WTC11 (cell line): ENCODE measurements at regions of chr22 and their contacts with region 1.

Region 1: GRCh38 chr22:22666307-22667091 is 22.1 kb downstream of the GGTLC2 start:
- DNase-seq: peak; percentile 71
- ATAC-seq: peak; percentile 95
- H3K4me3 Mint-ChIP-seq: no peak overlapping the region
- H3K27ac Mint-ChIP-seq: no peak overlapping the region
- H3K4me1 Mint-ChIP-seq: no peaks in the 10 kb centered on the region
- H3K27me3 Mint-ChIP-seq: peaks cover 96% of the 10 kb centered on the region
- CTCF ChIP-seq: peak; percentile 23; the same call in 1 of the 2 replicates

Region 2: GRCh38 chr22:22422629-22423112 is 243.8 kb before region 1 on chr22:
- CTCF ChIA-PET with region 1: interaction called, 10 read pairs
- POLR2A ChIA-PET with region 1: no interaction called
- DNase-seq: peak; percentile 82
- ATAC-seq: peak; percentile 75
- H3K4me3 Mint-ChIP-seq: no peak overlapping the region
- H3K27ac Mint-ChIP-seq: no peak overlapping the region
- H3K4me1 Mint-ChIP-seq: peaks cover 16% of the 10 kb centered on the region
- H3K27me3 Mint-ChIP-seq: peaks cover 98% of the 10 kb centered on the region
- CTCF ChIP-seq: peak; percentile 52

Region 3: GRCh38 chr22:22605074-22605404 is 61.5 kb before region 1 on chr22:
- CTCF ChIA-PET with region 1: no interaction called
- POLR2A ChIA-PET with region 1: no interaction called
- DNase-seq: no peak
- ATAC-seq: no peak
- H3K4me3 Mint-ChIP-seq: no peak overlapping the region
- H3K27ac Mint-ChIP-seq: no peak overlapping the region
- H3K4me1 Mint-ChIP-seq: peaks cover 14% of the 10 kb centered on the region
- H3K27me3 Mint-ChIP-seq: peaks cover 94% of the 10 kb centered on the region
- CTCF ChIP-seq: no peak

Region 4: DNA sequence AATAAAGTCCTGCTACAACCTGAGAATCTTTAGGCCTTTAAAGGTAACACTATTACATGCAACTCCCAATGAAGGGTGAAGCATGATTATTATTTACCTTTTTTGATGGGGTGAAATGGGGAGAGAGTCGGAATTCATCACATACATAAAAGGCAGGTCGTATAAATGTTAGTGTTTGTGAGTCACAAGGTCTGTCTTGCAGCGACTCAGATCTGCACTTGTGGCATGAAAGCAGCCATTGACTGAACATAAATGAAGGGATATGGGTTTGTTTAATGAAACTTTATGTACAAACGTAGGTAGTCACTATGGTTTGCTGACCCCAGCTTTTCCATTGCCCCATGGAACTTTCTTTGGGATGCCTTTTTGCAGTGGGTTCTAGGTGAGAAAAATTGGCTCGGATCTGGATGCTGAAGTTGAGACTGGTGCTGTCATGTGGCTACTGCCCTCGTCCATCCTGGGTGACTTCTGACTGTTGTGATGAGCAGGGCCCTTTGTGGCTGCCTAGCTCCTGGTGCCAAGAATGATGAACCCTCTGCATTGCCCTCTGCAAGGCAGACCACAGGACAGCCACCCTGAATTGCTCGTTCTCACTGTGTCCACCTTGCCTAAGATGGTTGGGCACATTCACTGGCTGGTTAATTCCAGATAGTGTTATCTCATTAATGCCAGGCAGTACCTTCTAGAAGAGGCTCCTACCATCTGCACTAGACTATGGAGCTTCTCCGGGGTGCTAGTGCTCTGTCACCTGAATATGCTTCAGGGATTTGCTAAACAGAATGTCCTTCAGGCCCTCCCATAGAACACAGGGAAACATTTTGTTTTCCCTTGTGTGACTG is 10.8 kb before region 1 on chr22:
- CTCF ChIA-PET with region 1: interaction called, 10 read pairs
- POLR2A ChIA-PET with region 1: no interaction called
- DNase-seq: no peak
- ATAC-seq: no peak
- H3K4me3 Mint-ChIP-seq: no peak overlapping the region
- H3K27ac Mint-ChIP-seq: no peak overlapping the region
- H3K4me1 Mint-ChIP-seq: no peaks in the 10 kb centered on the region
- H3K27me3 Mint-ChIP-seq: peaks cover 68% of the 10 kb centered on the region
- CTCF ChIP-seq: no peak

Region 5: DNA sequence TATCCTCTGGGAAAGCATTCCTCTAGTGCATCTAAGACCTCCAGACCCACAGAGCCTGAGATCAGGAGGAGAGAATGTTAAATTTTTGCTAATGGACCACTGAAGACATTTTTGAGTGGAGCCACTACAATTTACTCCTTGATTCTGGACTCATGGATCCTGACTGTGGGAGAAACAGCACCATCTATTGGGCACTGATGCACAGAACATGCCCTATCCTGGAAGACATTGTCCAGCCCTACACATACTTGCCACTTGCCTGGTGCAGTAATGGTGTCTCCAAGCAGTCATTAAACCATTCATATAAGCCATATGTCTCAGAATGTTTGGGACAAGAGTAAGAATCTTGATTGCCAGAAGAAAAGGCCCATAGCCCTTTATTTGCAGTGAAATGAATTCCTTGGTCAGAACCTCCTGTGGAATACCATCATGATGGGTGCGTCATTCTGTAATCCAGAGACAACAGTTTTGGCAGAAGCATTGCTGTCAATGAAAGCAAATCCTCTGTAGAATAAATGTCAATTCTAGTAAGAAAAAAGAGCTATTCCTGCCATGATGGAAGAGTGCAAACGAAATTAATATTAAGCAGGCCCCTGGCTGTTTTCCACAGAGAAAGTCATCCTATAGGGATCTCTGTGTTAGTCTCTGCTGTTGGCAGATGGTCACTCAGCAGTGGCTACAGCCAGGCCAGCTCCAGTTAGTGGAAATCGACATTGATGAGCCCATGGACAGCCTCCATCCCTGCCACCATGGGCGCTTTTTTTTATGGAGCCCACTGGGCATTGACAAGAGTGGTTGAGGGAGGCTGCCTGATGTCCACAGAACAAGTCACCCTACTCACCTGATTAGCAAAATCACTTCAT is 21.4 kb after region 1 on chr22:
- CTCF ChIA-PET with region 1: interaction called, 61 read pairs
- POLR2A ChIA-PET with region 1: no interaction called
- DNase-seq: peak; percentile 24
- ATAC-seq: peak; percentile 82
- H3K4me3 Mint-ChIP-seq: no peak overlapping the region
- H3K27ac Mint-ChIP-seq: no peak overlapping the region
- H3K4me1 Mint-ChIP-seq: peaks cover 4% of the 10 kb centered on the region; the same call in 1 of the 2 replicates
- H3K27me3 Mint-ChIP-seq: peaks cover 95% of the 10 kb centered on the region
- CTCF ChIP-seq: peak; percentile 39

Region 6: DNA sequence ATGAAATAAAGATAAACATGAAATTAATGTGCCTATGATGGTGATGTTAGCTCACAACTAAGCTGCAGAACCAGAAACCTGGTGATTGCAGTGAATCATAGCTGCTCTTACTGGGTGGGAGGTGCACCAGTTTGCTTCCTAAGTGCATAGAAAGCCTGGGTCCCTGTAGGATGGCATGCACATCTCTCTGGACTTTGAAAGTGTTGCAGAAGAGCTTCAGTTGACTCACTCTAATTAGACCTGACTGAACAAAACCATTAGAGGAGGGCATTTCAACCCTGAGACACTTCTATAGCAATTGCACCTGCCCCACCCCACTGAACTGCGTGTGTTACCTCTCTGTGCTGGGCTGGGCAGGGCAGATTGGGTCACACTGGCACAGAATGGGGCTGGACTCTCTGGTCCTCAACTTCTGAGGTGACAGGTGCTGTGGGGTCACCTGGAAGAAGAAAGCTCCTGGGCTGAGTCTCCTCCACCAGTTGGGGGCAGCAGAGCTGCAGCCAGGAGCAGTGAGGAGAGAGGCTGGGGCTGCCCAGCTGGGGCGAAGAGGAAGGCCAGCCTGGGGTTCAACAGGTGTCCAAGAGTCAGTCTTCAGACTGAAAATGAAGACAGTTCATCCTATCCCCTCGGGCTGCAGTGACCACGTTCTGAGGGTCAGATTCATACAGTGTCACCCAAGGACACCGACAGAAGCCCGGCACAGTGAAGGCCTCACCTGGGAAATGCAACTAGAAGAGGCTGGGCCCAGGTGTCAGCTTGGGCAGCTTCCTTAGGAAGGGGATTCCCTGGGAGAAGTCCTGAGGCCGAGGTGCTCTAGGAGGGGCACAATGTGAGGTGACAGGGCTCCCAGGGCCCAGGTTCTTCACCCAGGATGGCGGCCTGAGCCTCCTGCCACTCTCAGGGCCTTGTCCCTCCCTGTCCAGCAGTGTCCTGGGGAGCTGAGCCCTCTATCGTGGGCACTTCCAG is 36.0 kb after region 1 on chr22:
- CTCF ChIA-PET with region 1: interaction called, 26 read pairs
- POLR2A ChIA-PET with region 1: no interaction called
- DNase-seq: peak; percentile 61
- ATAC-seq: peak; percentile 86
- H3K4me3 Mint-ChIP-seq: no peak overlapping the region
- H3K27ac Mint-ChIP-seq: no peak overlapping the region
- H3K4me1 Mint-ChIP-seq: no peaks in the 10 kb centered on the region
- H3K27me3 Mint-ChIP-seq: peaks cover 99% of the 10 kb centered on the region
- CTCF ChIP-seq: peak; percentile 52; the same call in 1 of the 2 replicates

Region 7: DNA sequence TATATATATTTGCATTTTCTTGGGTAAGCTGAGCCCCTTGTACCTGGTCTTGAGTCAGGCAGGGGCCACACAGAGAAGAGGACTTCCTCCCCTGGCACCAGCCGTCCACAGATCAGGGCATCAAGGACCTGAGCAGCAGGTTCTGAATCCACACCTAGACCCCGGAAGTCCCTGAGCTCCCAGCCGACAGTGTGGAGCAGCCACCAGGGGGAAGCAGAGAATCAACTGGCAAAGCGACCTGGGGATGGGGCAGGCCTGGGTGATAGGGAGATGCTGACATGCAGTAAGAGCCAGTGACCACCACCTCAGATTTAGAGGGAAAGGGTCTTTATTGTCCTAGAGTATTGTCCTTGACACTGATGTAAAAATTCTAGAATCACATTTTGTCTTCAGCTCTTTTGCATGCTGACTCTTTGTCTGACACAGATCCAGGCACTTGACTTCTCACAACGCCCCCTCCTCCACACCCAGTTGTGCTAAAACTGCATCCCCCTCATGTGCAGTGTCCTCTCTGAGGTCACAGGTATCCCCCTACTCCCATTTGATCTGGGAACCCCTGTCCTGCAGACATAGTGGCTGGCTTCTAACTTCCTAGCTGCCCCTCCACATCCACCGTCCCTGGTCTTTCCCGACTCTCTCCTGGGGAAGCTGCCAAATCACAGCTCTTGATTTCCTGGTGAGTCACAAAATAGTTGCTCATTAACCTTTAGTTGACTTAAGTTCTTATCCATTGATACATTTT is 87.2 kb after region 1 on chr22:
- CTCF ChIA-PET with region 1: interaction called, 10 read pairs
- POLR2A ChIA-PET with region 1: no interaction called
- DNase-seq: peak; percentile 83
- ATAC-seq: peak; percentile 97
- H3K4me3 Mint-ChIP-seq: no peak overlapping the region
- H3K27ac Mint-ChIP-seq: no peak overlapping the region
- H3K4me1 Mint-ChIP-seq: no peaks in the 10 kb centered on the region
- H3K27me3 Mint-ChIP-seq: peaks cover 96% of the 10 kb centered on the region
- CTCF ChIP-seq: peak; percentile 33; the same call in 1 of the 2 replicates